CD4-positive, alpha-beta memory T cell (primary cell): ENCODE measurements at regions of chr16 and their contacts with region 1.

Region 1: DNA sequence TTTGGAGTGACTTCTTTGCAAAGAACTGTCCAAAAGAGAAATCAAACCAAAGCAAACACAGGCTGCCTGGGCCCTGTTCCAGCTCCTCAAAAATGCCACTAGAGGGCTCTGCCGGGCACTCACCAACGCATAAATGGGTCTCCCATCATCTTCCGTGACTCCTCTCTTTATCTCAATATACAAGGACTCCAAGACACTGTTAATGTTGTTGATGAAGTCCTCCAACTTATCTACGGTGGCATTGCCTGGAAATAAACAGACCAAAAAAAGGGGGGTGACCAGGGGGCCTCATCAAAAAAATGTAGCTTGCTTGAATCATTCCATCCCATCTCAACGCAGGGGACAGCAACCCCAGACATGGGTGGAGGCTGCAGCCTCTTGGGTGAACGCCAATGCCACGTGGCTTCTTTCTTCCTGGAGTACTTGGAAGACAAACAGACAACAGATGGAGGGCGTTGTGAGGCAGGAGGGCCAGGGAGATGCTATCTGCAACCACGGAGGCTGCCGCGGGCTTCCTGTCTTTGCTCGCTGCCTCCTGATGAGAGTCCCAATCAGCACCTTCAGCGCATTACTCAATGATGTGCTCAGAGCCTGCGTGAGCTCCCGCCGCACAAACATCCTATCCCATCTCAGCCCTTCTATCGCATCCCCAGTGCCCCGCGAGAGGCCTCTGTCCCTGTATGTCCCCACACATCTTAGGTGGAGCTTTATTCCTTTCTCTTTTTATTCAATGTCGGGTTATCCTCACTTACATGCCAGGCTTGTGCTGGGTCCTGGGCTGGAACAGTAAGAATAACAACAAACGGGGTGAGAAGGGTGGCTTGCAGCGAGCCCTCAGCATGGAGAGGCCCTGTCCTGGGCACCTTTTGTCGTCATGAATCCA is 32.0 kb downstream of the KDM8 start:
- DNase-seq: peak; percentile 95 to 99 (median 96)
- H3K4me3 ChIP-seq: peak overlapping the region; percentile 26 to 45
- H3K4me3 Mint-ChIP-seq: peak overlapping the region; percentile 75 to 92 (median 84)
- H3K27ac ChIP-seq: peak overlapping the region; percentile 90
- H3K27ac Mint-ChIP-seq: peak overlapping the region; percentile 97 to 100 (median 100)
- H3K4me1 ChIP-seq: peaks cover 99% of the 10 kb centered on the region
- H3K4me1 Mint-ChIP-seq: peaks cover 72 to 99% (median 84%) of the 10 kb centered on the region in 4 donors
- H3K27me3 ChIP-seq: no peaks in the 10 kb centered on the region
- H3K27me3 Mint-ChIP-seq: no peaks in the 10 kb centered on the region

Region 2: GRCh38 chr16:27203429-27204231 is 31.7 kb before region 1 on chr16 and contains the start of gene KDM8:
- CTCF ChIA-PET with region 1: interaction called, 105 read pairs
- POLR2A ChIA-PET with region 1: interaction called, 186 read pairs
- intact Hi-C with region 1: loop called (anchors 1 kb)
- DNase-seq: peak; percentile 99 to 100 (median 100)
- H3K4me3 ChIP-seq: peak within 1 kb of the TSS; percentile 61 to 85
- H3K4me3 Mint-ChIP-seq: peak within 1 kb of the TSS; percentile 97 to 100 (median 99)
- H3K27ac ChIP-seq: peak within 1 kb of the TSS; percentile 97
- H3K27ac Mint-ChIP-seq: peak within 1 kb of the TSS; percentile 92 to 100 (median 100)
- H3K4me1 ChIP-seq: peaks cover 60% of the 10 kb centered on the region
- H3K4me1 Mint-ChIP-seq: peaks cover 40 to 62% (median 48%) of the 10 kb centered on the region in 4 donors
- H3K27me3 ChIP-seq: no peaks in the 10 kb centered on the region
- H3K27me3 Mint-ChIP-seq: no peaks in the 10 kb centered on the region
- total RNA-seq, gene KDM8: 28.6 to 31.0 TPM

Region 3: DNA sequence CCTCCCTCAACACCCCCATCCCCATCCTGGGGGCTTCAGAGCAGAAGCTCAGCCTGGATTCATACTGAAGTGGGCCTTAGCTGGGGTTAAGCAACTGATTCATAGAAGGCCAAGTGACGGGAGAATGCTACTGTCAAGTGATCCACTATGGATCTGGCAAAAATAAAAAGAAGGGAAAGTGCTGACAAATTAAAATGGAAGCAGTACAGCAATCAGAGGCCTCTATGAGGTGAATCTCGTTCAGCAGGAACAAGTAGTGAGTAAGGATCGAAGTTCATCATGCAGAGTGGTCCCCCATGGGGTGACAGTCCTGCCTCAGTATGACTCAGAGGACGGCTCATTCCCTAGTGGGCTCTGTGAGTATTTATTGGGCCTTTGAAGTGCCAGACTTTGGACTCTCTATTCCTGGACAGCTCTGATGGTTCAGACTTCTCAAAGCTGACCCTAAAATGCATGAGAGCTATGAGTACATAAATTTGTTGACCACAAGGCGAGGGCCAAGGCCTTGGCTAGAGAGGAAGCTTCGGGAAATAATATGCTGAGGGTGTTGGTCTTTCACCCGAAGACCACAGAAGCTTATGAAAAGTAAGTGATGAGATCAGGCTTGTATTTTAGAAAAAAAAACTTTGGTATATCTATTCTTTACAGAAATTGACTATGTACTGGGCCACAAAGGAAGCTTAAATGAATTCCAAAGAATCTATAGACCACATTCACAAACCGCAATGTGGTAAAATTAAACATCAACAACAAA is 38.6 kb after region 1 on chr16:
- CTCF ChIA-PET with region 1: interaction called, 58 read pairs
- POLR2A ChIA-PET with region 1: interaction called, 62 read pairs
- intact Hi-C with region 1: no loop called
- DNase-seq: peak in 3 of 5 donors; percentile 14 to 31 (median 27)
- H3K4me3 ChIP-seq: no peak overlapping the region
- H3K4me3 Mint-ChIP-seq: peak overlapping the region in 7 of 8 donors; percentile 25 to 74 (median 53)
- H3K27ac ChIP-seq: no peak overlapping the region
- H3K27ac Mint-ChIP-seq: peak overlapping the region; percentile 48 to 77 (median 57)
- H3K4me1 ChIP-seq: peaks cover 12% of the 10 kb centered on the region
- H3K4me1 Mint-ChIP-seq: peaks cover 10 to 37% (median 26%) of the 10 kb centered on the region in 4 donors
- H3K27me3 ChIP-seq: no peaks in the 10 kb centered on the region
- H3K27me3 Mint-ChIP-seq: no peaks in the 10 kb centered on the region

Region 4: GRCh38 chr16:27355610-27356009 is 120.3 kb after region 1 on chr16:
- CTCF ChIA-PET with region 1: interaction called, 22 read pairs
- POLR2A ChIA-PET with region 1: interaction called, 18 read pairs
- intact Hi-C with region 1: loop called (anchors 1 kb)
- DNase-seq: peak; percentile 20 to 55 (median 37)
- H3K4me3 ChIP-seq: no peak overlapping the region
- H3K4me3 Mint-ChIP-seq: peak overlapping the region in 1 of 8 donors; percentile 5
- H3K27ac ChIP-seq: no peak overlapping the region
- H3K27ac Mint-ChIP-seq: peak overlapping the region in 6 of 7 donors; percentile 30 to 95 (median 72)
- H3K4me1 ChIP-seq: no peaks in the 10 kb centered on the region
- H3K4me1 Mint-ChIP-seq: peaks cover 12 to 16% (median 14%) of the 10 kb centered on the region in 4 donors
- H3K27me3 ChIP-seq: no peaks in the 10 kb centered on the region
- H3K27me3 Mint-ChIP-seq: no peaks in the 10 kb centered on the region

Region 5: DNA sequence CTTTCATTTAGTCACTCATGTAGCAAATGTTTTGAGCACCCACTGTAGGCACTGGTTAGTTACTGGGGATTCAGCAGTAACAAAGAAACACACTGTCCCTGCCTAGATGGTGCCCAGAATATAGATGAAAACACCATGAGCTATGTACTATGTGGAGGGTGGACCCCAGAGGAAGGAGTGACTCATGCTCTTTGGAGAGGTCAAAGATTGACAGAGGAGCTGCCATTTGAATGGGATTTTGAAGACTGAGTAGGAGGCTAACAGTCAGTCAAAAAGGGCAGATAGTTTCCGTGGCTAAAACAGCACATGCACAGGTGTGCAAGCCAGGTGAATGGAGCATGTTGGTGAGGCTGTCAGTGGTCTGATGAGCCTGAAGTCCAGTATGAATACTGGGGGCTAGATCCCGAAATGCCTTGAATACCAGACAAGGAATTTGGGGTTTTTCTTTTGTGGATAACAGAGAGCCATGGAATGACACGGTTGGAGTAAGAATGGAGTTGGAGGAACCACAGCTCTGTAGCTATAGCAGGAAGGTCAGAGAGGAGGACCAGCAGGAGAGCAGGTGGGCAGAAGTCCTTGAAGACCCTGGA is 172.8 kb after region 1 on chr16:
- CTCF ChIA-PET with region 1: interaction called, 16 read pairs
- POLR2A ChIA-PET with region 1: interaction called, 70 read pairs
- intact Hi-C with region 1: no loop called
- DNase-seq: peak in 1 of 5 donors; percentile 68
- H3K4me3 ChIP-seq: peak overlapping the region in 1 of 2 donors; percentile 0
- H3K4me3 Mint-ChIP-seq: peak overlapping the region; percentile 59 to 99 (median 90)
- H3K27ac ChIP-seq: peak overlapping the region; percentile 66
- H3K27ac Mint-ChIP-seq: peak overlapping the region; percentile 85 to 97 (median 90)
- H3K4me1 ChIP-seq: peaks cover 85% of the 10 kb centered on the region
- H3K4me1 Mint-ChIP-seq: peaks cover 54 to 89% (median 67%) of the 10 kb centered on the region in 4 donors
- H3K27me3 ChIP-seq: no peaks in the 10 kb centered on the region
- H3K27me3 Mint-ChIP-seq: no peaks in the 10 kb centered on the region